ENCODE measurements at regions of chr4 and their contacts with region 1.

Region 1: DNA sequence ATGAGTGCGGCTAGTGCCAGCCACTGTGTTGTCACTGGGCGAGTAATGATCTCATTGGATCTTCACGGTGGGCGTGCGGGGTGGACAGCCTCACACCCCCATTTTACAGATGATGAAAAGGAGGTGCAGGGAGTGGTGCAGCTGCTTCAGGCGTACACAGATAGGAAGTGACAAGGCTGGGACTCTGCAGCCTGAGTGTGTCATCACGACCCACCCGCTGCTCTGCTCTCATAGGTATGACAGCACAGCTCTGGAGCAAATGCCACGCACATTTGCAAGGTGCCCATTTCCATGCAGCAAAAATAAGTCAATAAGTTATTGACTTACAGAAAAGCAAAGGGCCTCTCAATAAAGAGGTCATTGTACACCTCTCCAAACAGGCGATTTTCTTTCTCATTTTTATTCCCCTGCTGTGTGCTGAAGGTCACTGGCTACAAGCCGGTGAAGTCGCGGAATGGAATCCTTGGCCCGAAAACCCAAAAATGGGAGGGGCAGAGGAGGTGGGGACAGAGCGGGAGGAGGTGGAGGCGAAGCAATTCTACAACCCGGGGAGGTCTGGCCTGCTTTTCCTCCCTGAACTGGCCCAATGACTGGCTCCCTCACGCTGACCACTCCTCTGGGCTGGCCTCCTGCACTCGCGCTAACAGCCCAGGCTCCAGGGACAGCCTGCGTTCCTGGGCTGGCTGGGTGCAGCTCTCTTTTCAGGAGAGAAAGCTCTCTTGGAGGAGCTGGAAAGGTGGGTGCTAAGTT is at the start of gene SOD3:
- DNase-seq: peak; percentile 80 to 81
- ATAC-seq: peak; percentile 82 to 89 (median 86)
- H3K4me3 ChIP-seq: peak within 1 kb of the TSS; percentile 55
- H3K27ac ChIP-seq: peak within 1 kb of the TSS; percentile 74
- H3K4me1 ChIP-seq: peaks cover 18% of the 10 kb centered on the region
- H3K27me3 ChIP-seq: peaks cover 0 to 2% (median 0%) of the 10 kb centered on the region in 3 donors
- CTCF ChIP-seq: no peak
- total RNA-seq, gene SOD3: 3.8 to 15.6 (median 9.2) TPM

Region 2: GRCh38 chr4:24657768-24658617 is 137.1 kb before region 1 on chr4:
- intact Hi-C with region 1: no loop called
- DNase-seq: no peak
- ATAC-seq: no peak
- H3K4me3 ChIP-seq: no peak overlapping the region
- H3K27ac ChIP-seq: no peak overlapping the region
- H3K4me1 ChIP-seq: peaks cover 5% of the 10 kb centered on the region
- H3K27me3 ChIP-seq: no peaks in the 10 kb centered on the region
- CTCF ChIP-seq: no peak

Region 3: DNA sequence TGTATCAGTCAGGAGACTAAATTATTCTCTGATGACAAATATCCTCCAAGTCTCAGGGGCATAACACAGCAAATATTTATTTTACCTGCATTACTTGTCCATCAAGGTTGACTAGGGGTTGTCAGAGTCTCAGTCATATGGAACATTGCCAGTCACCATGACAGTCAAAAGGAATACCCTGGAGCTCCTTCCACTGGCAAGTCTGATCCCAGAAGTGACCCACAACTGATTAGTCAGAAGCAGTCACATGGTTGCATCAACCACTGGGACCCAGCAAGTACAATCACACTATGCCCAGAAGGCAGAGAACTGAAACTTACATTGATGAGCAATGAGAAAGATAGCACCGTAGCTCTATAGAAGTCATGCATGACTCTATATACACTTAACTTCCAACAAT is 41.6 kb before region 1 on chr4:
- intact Hi-C with region 1: loop called in 1 of 2 experiments (anchors 5 kb)
- DNase-seq: no peak
- ATAC-seq: no peak
- H3K4me3 ChIP-seq: no peak overlapping the region
- H3K27ac ChIP-seq: no peak overlapping the region
- H3K4me1 ChIP-seq: no peaks in the 10 kb centered on the region
- H3K27me3 ChIP-seq: no peaks in the 10 kb centered on the region
- CTCF ChIP-seq: no peak